ENCODE measurements at regions of chr5 and their contacts with region 1.

Region 1: GRCh38 chr5:66306105-66306843 is 162.2 kb downstream of the SREK1 start:
- DNase-seq: peak; percentile 59
- ATAC-seq: peak; percentile 95
- H3K4me3 Mint-ChIP-seq: no peak overlapping the region
- H3K27ac Mint-ChIP-seq: no peak overlapping the region
- H3K4me1 Mint-ChIP-seq: 0 out of 2 replicates have a peak, but pooled peaks cover 3% of the 10 kb centered on the region
- H3K27me3 Mint-ChIP-seq: peaks cover 3% of the 10 kb centered on the region; the same call in 1 of the 2 replicates
- CTCF ChIP-seq: peak; percentile 71

Region 2: GRCh38 chr5:66122379-66123034 is 183.8 kb before region 1 on chr5:
- CTCF ChIA-PET with region 1: no interaction called
- POLR2A ChIA-PET with region 1: no interaction called
- DNase-seq: no peak
- ATAC-seq: no peak
- H3K4me3 Mint-ChIP-seq: no peak overlapping the region
- H3K27ac Mint-ChIP-seq: no peak overlapping the region
- H3K4me1 Mint-ChIP-seq: no peaks in the 10 kb centered on the region
- H3K27me3 Mint-ChIP-seq: peaks cover 4% of the 10 kb centered on the region; the same call in 1 of the 2 replicates
- CTCF ChIP-seq: no peak

Region 3: GRCh38 chr5:66209350-66209749 is 96.9 kb before region 1 on chr5:
- CTCF ChIA-PET with region 1: no interaction called
- POLR2A ChIA-PET with region 1: no interaction called
- DNase-seq: peak; percentile 24
- ATAC-seq: peak; percentile 89
- H3K4me3 Mint-ChIP-seq: no peak overlapping the region
- H3K27ac Mint-ChIP-seq: no peak overlapping the region
- H3K4me1 Mint-ChIP-seq: peaks cover 4% of the 10 kb centered on the region; the same call in 1 of the 2 replicates
- H3K27me3 Mint-ChIP-seq: no peaks in the 10 kb centered on the region
- CTCF ChIP-seq: no peak

Region 4: GRCh38 chr5:66333192-66333591 is 26.9 kb after region 1 on chr5:
- CTCF ChIA-PET with region 1: interaction called, 12 read pairs
- POLR2A ChIA-PET with region 1: no interaction called
- DNase-seq: no peak
- ATAC-seq: no peak
- H3K4me3 Mint-ChIP-seq: no peak overlapping the region
- H3K27ac Mint-ChIP-seq: no peak overlapping the region
- H3K4me1 Mint-ChIP-seq: peaks cover 12% of the 10 kb centered on the region
- H3K27me3 Mint-ChIP-seq: no peaks in the 10 kb centered on the region
- CTCF ChIP-seq: no peak

Region 5: GRCh38 chr5:66498791-66499207 is 192.5 kb after region 1 on chr5:
- CTCF ChIA-PET with region 1: interaction called, 33 read pairs
- POLR2A ChIA-PET with region 1: no interaction called
- DNase-seq: no peak
- ATAC-seq: peak; percentile 55
- H3K4me3 Mint-ChIP-seq: no peak overlapping the region
- H3K27ac Mint-ChIP-seq: no peak overlapping the region
- H3K4me1 Mint-ChIP-seq: no peaks in the 10 kb centered on the region
- H3K27me3 Mint-ChIP-seq: peaks cover 1% of the 10 kb centered on the region; the same call in 1 of the 2 replicates
- CTCF ChIP-seq: no peak

Region 6: GRCh38 chr5:66742083-66742895 is 436.0 kb after region 1 on chr5:
- CTCF ChIA-PET with region 1: interaction called, 12 read pairs
- POLR2A ChIA-PET with region 1: no interaction called
- DNase-seq: peak; percentile 35
- ATAC-seq: peak; percentile 78
- H3K4me3 Mint-ChIP-seq: no peak overlapping the region
- H3K27ac Mint-ChIP-seq: no peak overlapping the region
- H3K4me1 Mint-ChIP-seq: no peaks in the 10 kb centered on the region
- H3K27me3 Mint-ChIP-seq: no peaks in the 10 kb centered on the region
- CTCF ChIP-seq: 0 out of 2 replicates have a peak, but pooled peaks have one; percentile 25

Region 7: DNA sequence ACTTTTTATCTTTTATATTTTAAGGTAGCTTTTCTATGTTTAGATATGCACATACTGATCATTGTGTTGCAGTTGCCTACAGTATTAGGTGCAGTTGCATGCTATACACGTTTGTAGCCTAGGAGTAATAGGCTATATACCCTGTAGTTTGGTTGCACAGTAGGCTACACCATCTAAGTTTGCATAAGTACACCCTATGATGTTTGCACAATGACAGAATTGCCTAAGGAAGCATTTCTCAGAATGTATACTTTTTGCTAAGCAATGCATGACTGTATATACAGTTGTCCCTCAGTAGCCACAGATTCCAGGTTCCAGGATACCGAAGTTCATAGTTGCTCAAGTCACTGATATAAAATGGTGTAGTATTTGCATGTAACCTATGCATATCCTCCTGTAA is 458.7 kb after region 1 on chr5:
- CTCF ChIA-PET with region 1: interaction called, 20 read pairs
- POLR2A ChIA-PET with region 1: no interaction called
- DNase-seq: no peak
- ATAC-seq: no peak
- H3K4me3 Mint-ChIP-seq: no peak overlapping the region
- H3K27ac Mint-ChIP-seq: no peak overlapping the region
- H3K4me1 Mint-ChIP-seq: no peaks in the 10 kb centered on the region
- H3K27me3 Mint-ChIP-seq: no peaks in the 10 kb centered on the region; the same call in 1 of the 2 replicates
- CTCF ChIP-seq: no peak